Astrocyte of the cerebellum (primary cell): ENCODE measurements at regions of chr2 and their contacts with region 1.

Region 1: GRCh38 chr2:218295029-218295428 is 2.7 kb upstream of the TMBIM1 start:
- DNase-seq: no peak
- H3K4me3 ChIP-seq: no peak overlapping the region
- CTCF ChIP-seq: no peak

Region 2: GRCh38 chr2:218357236-218358159 is 62.5 kb after region 1 on chr2:
- in situ Hi-C with region 1: loop called (anchors 5 kb)
- DNase-seq: no peak
- H3K4me3 ChIP-seq: no peak overlapping the region
- CTCF ChIP-seq: no peak

Region 3: DNA sequence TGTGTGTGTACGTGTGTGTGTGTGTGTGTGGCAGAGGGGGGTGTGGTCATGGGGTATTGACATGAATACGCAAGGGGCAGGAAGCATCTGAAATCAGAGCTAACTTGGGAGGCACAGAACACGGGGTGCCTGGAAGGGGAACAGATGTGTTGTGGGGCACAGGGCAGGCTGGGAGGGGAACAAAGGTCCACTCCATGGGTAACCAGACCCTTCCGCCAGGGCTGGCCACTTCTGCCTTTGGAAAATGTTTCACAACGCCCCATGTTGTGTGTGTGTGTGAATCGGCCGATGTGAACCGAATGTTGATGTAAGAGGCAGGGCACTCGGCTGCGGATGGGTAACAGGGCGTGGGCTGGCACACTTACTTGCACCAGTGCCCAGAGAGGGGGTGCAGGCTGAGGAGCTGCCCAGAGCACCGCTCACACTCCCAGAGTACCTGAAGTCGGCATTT is 86.9 kb after region 1 on chr2 and contains the start of gene SLC11A1:
- in situ Hi-C with region 1: loop called (anchors 5 kb)
- DNase-seq: no peak
- H3K4me3 ChIP-seq: no peak within 1 kb of the TSS
- CTCF ChIP-seq: no peak